ENCODE measurements at regions of chr4 and their contacts with region 1.

Region 1: GRCh38 chr4:77600521-77601451 is 4.8 kb upstream of the CXCL13 start:
- DNase-seq: no peak
- H3K4me3 ChIP-seq: no peak overlapping the region
- H3K27ac ChIP-seq: no peak overlapping the region
- H3K4me1 ChIP-seq: no peaks in the 10 kb centered on the region
- H3K27me3 ChIP-seq: no peaks in the 10 kb centered on the region; a peak in 1 of 7 replicates
- CTCF ChIP-seq: peak; percentile 10 to 88 (median 80)
- EP300 ChIP-seq: no peak
- POLR2A ChIP-seq: no peak
- RAD21 ChIP-seq: peak; percentile 69 to 77

Region 2: GRCh38 chr4:77433418-77433733 is 167.4 kb before region 1 on chr4:
- CTCF ChIA-PET with region 1: interaction called, 12 read pairs
- POLR2A ChIA-PET with region 1: no interaction called
- DNase-seq: no peak
- H3K4me3 ChIP-seq: no peak overlapping the region
- H3K27ac ChIP-seq: no peak overlapping the region
- H3K4me1 ChIP-seq: peaks cover 0 to 3% (median 0%) of the 10 kb centered on the region in 4 experiments; a peak in 1 of 7 replicates
- H3K27me3 ChIP-seq: no peaks in the 10 kb centered on the region; a peak in 1 of 7 replicates
- CTCF ChIP-seq: peak in 2 of 3 experiments; percentile 64 to 87; a peak in 3 of 4 replicates
- EP300 ChIP-seq: no peak
- POLR2A ChIP-seq: no peak
- RAD21 ChIP-seq: peak; percentile 79 to 89

Region 3: GRCh38 chr4:77493120-77493752 is 107.5 kb before region 1 on chr4:
- CTCF ChIA-PET with region 1: interaction called, 10 read pairs
- POLR2A ChIA-PET with region 1: no interaction called
- DNase-seq: no peak
- H3K4me3 ChIP-seq: no peak overlapping the region
- H3K27ac ChIP-seq: no peak overlapping the region
- H3K4me1 ChIP-seq: no peaks in the 10 kb centered on the region
- H3K27me3 ChIP-seq: no peaks in the 10 kb centered on the region
- CTCF ChIP-seq: no peak
- EP300 ChIP-seq: no peak
- POLR2A ChIP-seq: no peak
- RAD21 ChIP-seq: no peak

Region 4: DNA sequence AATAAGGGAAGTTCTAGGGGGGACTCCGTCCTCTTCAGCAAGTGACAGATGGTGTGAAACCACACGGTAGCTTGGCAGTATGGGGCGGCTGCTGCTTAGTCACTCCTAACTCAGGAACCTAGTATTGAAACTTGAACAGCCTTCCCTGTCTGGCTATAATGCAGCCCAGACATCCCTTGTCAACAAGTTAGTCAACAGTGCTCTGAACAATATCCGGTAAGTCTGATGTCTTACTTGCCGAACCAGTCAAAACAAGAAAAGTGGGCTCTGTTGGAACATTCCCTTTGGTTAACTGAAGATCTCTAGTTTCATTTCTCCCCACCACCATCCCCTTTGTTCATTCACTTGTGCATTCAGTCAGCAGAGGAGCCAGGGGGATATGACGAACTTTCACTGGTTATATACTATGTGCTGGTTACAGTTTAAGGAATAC is 13.8 kb before region 1 on chr4:
- CTCF ChIA-PET with region 1: interaction called, 77 read pairs
- POLR2A ChIA-PET with region 1: no interaction called
- DNase-seq: no peak
- H3K4me3 ChIP-seq: no peak overlapping the region
- H3K27ac ChIP-seq: no peak overlapping the region
- H3K4me1 ChIP-seq: peaks cover 0 to 5% (median 0%) of the 10 kb centered on the region in 4 experiments; a peak in 2 of 7 replicates
- H3K27me3 ChIP-seq: no peaks in the 10 kb centered on the region
- CTCF ChIP-seq: no peak
- EP300 ChIP-seq: no peak
- POLR2A ChIP-seq: no peak
- RAD21 ChIP-seq: no peak

Region 5: GRCh38 chr4:77629885-77630284 is 29.1 kb after region 1 on chr4:
- CTCF ChIA-PET with region 1: interaction called, 13 read pairs
- POLR2A ChIA-PET with region 1: no interaction called
- DNase-seq: no peak
- H3K4me3 ChIP-seq: no peak overlapping the region
- H3K27ac ChIP-seq: no peak overlapping the region
- H3K4me1 ChIP-seq: no peaks in the 10 kb centered on the region
- H3K27me3 ChIP-seq: no peaks in the 10 kb centered on the region
- CTCF ChIP-seq: no peak
- EP300 ChIP-seq: no peak
- POLR2A ChIP-seq: no peak
- RAD21 ChIP-seq: no peak